A549 (cell line): ENCODE measurements at regions of chr15 and their contacts with region 1.

Region 1: DNA sequence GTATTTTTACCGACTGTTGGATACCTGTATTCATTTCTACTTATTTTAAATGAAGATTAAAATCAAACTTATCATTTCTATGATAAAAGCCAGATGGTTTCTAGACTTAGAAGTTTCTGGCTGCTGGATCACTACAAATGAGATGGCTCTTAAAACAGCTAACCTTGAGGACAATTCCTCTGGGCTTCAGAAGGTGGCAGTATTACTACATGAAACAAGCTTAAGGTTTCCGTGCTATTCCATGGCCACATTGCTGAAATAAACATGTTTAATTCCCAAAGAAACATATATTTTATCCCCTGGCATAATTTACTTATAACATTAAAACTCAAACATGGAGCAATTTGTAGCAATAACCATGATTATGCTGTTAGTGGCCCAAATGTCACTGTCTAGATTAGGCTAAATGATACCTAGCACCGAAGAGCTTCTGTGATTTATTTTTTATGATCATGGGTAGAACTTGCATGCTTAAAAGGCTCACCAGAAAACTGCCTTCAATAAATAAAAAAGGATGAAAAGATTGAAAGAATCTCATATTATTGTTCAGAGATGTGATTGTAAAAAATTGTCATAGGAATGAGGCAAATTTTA is 204.0 kb upstream of the NANOGP8 start:
- DNase-seq: peak; percentile 42 to 72
- ATAC-seq: peak; percentile 75 to 80; a peak in 5 of 6 replicates
- H3K4me3 ChIP-seq: no peak overlapping the region
- H3K27ac ChIP-seq: no peak overlapping the region
- H3K4me1 ChIP-seq: peaks cover 12% of the 10 kb centered on the region; the same call in 2 of the 3 replicates
- CTCF ChIP-seq: peak; percentile 91
- EP300 ChIP-seq: no peak
- POLR2A ChIP-seq: no peak
- RAD21 ChIP-seq: peak; percentile 94 to 95

Region 2: DNA sequence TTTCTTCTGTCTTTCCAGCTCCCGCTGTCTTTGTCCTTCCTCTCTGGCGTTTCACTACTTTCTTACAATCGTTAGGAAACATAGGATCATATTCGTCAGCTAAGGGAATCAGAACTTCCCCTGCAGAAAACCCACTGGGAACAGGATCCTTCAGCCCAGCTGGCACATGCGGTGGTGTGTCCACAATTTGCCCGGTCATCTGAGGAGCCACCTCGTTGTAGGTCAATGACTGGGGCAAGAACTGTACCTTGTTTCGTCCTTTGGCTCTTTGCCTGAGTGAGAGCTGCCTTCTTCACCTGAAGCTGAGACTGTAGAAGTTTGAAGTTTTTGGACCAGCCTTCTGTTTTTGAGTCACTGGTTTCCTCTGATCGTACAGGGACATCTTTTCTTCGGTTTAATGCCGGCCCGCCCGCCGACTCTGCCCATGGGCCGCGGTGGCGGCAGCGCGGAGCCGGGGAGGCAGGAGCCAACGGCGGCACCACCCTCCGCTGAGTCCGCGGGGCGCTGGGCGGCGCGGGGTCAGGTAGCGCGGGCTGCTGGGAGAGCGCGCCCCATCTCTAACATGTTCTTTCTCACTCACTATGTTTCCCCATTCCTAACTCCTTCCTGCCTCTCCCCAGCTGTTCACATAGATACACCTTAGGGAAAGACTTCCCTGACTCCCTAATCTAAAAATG is 10.1 kb after region 1 on chr15:
- CTCF ChIA-PET with region 1: interaction called, 18 read pairs
- POLR2A ChIA-PET with region 1: no interaction called
- DNase-seq: no peak
- ATAC-seq: no peak
- H3K4me3 ChIP-seq: no peak overlapping the region
- H3K27ac ChIP-seq: no peak overlapping the region
- H3K4me1 ChIP-seq: no peaks in the 10 kb centered on the region
- CTCF ChIP-seq: no peak
- EP300 ChIP-seq: no peak
- POLR2A ChIP-seq: no peak
- RAD21 ChIP-seq: no peak

Region 3: GRCh38 chr15:35308802-35309201 is 19.7 kb after region 1 on chr15:
- CTCF ChIA-PET with region 1: interaction called, 14 read pairs
- POLR2A ChIA-PET with region 1: no interaction called
- DNase-seq: peak in 1 of 2 experiments; percentile 53
- ATAC-seq: peak in 1 of 2 experiments; percentile 37; a peak in 1 of 6 replicates
- H3K4me3 ChIP-seq: no peak overlapping the region
- H3K27ac ChIP-seq: peak overlapping the region in 1 of 2 experiments; percentile 48; a peak in 1 of 6 replicates
- H3K4me1 ChIP-seq: peaks cover 14% of the 10 kb centered on the region; the same call in 1 of the 3 replicates
- CTCF ChIP-seq: no peak
- EP300 ChIP-seq: no peak
- POLR2A ChIP-seq: no peak
- RAD21 ChIP-seq: no peak

Region 4: GRCh38 chr15:35444557-35445204 is 155.6 kb after region 1 on chr15:
- CTCF ChIA-PET with region 1: interaction called, 41 read pairs
- POLR2A ChIA-PET with region 1: interaction called, 5 read pairs
- DNase-seq: peak; percentile 8 to 47
- ATAC-seq: peak; percentile 39 to 54; a peak in 2 of 6 replicates
- H3K4me3 ChIP-seq: no peak overlapping the region
- H3K27ac ChIP-seq: no peak overlapping the region
- H3K4me1 ChIP-seq: peaks cover 15% of the 10 kb centered on the region; the same call in 2 of the 3 replicates
- CTCF ChIP-seq: peak; percentile 65
- EP300 ChIP-seq: no peak
- POLR2A ChIP-seq: no peak
- RAD21 ChIP-seq: peak; percentile 62 to 73

Region 5: DNA sequence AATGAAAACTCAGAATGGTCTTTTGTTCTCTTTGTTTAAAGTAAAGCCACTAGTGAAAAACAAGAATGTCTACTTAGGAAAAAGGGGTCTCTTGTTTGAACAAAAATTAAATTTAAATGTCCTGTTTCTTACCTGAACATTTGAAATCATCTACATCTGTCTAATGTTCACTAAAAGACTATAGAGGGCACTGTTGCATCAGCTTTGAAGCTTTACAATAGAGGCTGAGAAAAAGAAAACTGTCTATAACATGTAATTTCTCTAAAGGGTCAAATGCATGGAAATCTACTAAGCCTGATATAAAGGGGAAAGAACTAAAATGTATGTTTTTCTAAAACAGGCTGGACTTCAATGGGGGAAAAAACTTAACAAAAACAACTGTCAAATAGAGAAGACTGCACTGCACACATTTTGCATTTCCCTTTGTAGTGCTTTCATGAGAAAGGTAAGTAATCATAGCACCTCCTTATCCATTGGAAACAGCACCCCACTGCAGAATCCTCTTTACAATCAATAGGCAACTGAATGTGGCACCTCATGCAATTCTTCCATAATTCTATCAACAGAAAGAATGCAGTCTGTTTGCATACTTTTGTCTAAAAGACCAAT is 230.5 kb after region 1 on chr15:
- CTCF ChIA-PET with region 1: no interaction called
- POLR2A ChIA-PET with region 1: no interaction called
- DNase-seq: peak in 1 of 2 experiments; percentile 32
- ATAC-seq: peak; percentile 54 to 56; a peak in 3 of 6 replicates
- H3K4me3 ChIP-seq: no peak overlapping the region
- H3K27ac ChIP-seq: no peak overlapping the region
- H3K4me1 ChIP-seq: peaks cover 3% of the 10 kb centered on the region; the same call in 1 of the 3 replicates
- CTCF ChIP-seq: peak; percentile 60
- EP300 ChIP-seq: no peak
- POLR2A ChIP-seq: no peak
- RAD21 ChIP-seq: peak; percentile 72 to 79